ENCODE measurements at regions of chr14 and their contacts with region 1.

Region 1: DNA sequence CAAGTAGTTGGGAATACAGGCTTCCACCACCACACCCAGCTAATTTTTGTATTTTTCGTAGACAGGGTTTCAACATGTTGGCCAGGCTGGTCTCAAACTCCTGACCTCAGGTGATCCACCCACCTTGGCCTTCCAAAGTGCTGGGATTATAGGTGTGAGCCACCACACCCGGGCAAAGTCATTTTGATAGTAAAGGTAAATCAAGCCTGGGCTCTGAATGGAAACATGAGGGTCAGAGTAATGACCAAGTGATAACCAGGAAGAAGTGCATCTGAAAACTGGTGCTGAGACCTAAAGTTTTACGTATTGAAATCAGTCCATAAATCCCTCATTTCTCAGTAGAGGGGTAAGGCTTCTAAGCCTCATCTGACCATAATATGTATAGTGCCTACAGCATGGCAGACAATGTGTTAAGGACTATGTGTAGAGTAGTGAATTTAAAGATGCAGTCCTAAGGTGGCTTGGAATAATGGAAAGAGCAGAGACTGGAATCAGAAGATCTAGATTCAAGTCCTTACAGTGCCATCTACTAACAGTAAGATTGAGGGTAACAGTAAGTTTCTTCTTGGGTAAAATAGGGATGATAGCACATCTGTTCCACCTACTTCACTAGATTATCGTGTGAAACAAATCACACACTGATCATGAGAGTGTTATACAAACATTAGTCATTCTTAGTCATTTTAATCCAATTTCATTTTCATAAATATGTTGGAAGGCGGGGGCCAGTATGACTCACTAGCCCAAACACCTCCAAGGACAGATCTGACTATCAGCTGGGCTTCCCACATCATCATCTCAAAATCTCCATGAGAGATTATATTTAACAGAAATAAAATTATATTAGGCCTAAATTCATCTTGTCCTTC is 11.2 kb downstream of the MAP4K5 start:
- DNase-seq: peak; percentile 77
- H3K4me3 Mint-ChIP-seq: peak overlapping the region; percentile 67
- H3K27ac Mint-ChIP-seq: peak overlapping the region; percentile 94
- H3K4me1 Mint-ChIP-seq: peaks cover 39% of the 10 kb centered on the region
- H3K27me3 Mint-ChIP-seq: no peaks in the 10 kb centered on the region

Region 2: GRCh38 chr14:50321009-50321660 is 200.0 kb before region 1 on chr14:
- intact Hi-C with region 1: loop called (anchors 1 kb)
- DNase-seq: peak; percentile 91
- H3K4me3 Mint-ChIP-seq: no peak overlapping the region
- H3K27ac Mint-ChIP-seq: no peak overlapping the region
- H3K4me1 Mint-ChIP-seq: peaks cover 22% of the 10 kb centered on the region
- H3K27me3 Mint-ChIP-seq: no peaks in the 10 kb centered on the region

Region 3: DNA sequence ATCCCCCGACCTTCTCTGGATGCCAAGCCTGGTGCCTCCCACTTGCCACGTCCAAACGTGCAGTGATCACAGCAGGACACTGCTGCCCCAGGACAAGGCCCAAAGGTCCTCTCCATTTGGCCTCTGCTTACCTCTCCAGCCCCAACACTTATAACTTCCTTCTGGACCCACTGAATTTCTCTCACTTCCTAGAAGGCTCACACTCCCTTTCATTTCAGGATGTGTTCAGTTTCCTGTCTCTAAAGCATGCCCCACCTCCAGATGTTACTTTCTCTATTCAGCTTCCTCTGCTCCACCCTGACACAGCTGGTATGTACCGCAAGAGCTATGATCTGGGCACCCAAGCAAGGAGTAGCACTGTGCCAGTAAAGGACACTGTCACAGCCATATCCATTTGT is 157.5 kb before region 1 on chr14:
- intact Hi-C with region 1: loop called (anchors 1 kb)
- DNase-seq: peak; percentile 89
- H3K4me3 Mint-ChIP-seq: peak overlapping the region; percentile 86
- H3K27ac Mint-ChIP-seq: peak overlapping the region; percentile 93
- H3K4me1 Mint-ChIP-seq: peaks cover 22% of the 10 kb centered on the region
- H3K27me3 Mint-ChIP-seq: no peaks in the 10 kb centered on the region

Region 4: DNA sequence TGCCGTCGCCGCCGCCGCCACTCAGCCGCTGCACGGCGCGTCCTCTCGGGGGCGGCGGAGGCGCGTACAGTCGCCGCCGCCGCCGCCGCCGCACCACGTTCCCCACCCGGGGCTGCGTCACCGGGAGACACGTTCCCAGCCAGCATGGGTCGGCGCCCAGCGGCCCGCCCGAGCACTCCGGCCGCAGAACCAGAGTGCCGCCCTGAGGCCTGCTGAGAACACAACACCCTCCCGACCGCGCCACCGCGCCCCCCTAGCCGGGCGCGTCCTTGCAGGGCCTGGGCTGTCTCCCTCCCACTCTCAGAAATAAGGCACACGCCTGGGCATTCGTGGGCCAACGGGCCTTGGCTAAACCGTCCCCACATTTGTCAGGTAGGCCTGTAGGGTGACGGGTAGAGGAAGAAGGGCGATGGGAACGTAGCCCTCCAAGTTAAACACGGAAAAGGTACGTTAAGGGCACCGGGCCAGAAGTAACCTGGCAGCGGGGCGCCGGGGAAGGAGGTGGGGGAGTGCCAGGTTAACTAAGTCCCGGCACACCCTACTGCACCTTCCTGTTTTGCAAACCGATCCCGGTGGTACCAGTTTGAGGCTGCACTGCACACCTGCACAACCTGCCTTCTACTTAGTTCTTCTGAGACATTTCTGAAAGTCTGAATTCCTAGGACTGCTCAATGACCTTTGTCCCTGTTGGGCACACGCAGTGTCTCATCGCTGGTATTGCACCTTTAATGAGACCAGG is 11.5 kb after region 1 on chr14 and contains the start of gene MAP4K5:
- intact Hi-C with region 1: loop called (anchors 1 kb)
- DNase-seq: peak; percentile 96
- H3K4me3 Mint-ChIP-seq: peak within 1 kb of the TSS; percentile 89
- H3K27ac Mint-ChIP-seq: peak within 1 kb of the TSS; percentile 75
- H3K4me1 Mint-ChIP-seq: peaks cover 38% of the 10 kb centered on the region
- H3K27me3 Mint-ChIP-seq: peaks cover 17% of the 10 kb centered on the region
- total RNA-seq, gene MAP4K5: 24.3 and 24.6 TPM in 2 replicates

Region 5: GRCh38 chr14:50736932-50737419 is 215.8 kb after region 1 on chr14:
- intact Hi-C with region 1: loop called (anchors 2 kb)
- DNase-seq: peak; percentile 74
- H3K4me3 Mint-ChIP-seq: peak overlapping the region; percentile 45
- H3K27ac Mint-ChIP-seq: peak overlapping the region; percentile 73
- H3K4me1 Mint-ChIP-seq: peaks cover 34% of the 10 kb centered on the region
- H3K27me3 Mint-ChIP-seq: no peaks in the 10 kb centered on the region

Region 6: DNA sequence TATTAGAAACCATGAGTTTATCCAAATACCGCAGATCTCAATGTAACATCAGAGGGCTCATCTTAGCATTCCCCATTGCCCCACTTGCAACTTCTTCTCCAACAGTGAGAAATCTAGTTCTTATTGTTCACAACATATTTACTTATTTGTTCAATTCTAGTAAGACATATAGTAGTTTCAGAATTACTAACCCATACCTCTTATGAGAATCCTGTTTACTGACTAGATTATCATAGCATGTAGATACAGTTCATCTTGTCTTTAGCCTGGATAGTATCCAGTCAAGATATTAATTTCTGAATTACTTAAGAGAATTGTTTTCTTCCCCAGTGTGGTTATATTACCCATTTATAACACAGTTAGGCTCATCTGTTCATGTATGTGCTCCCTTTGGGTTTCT is 229.1 kb after region 1 on chr14:
- intact Hi-C with region 1: no loop called
- DNase-seq: no peak
- H3K4me3 Mint-ChIP-seq: no peak overlapping the region
- H3K27ac Mint-ChIP-seq: peak overlapping the region; percentile 4
- H3K4me1 Mint-ChIP-seq: peaks cover 22% of the 10 kb centered on the region
- H3K27me3 Mint-ChIP-seq: no peaks in the 10 kb centered on the region

Measured in activated CD4-positive, alpha-beta T cell treated with anti-CD3 and anti-CD28 coated beads, Interleukin-2, amount 10 ng/mL, durations not matched to agents 24 days and 14 days (primary cell).